ENCODE measurements at regions of chr3 and their contacts with region 1.

Region 1: GRCh38 chr3:99808151-99808794 is 9.4 kb upstream of the CMSS1 start:
- DNase-seq: peak; percentile 24 to 60 (median 45)
- H3K4me3 ChIP-seq: no peak overlapping the region
- H3K4me3 Mint-ChIP-seq: no peak overlapping the region
- H3K27ac ChIP-seq: no peak overlapping the region
- H3K27ac Mint-ChIP-seq: no peak overlapping the region
- H3K4me1 ChIP-seq: no peaks in the 10 kb centered on the region
- H3K4me1 Mint-ChIP-seq: peaks cover 1% of the 10 kb centered on the region
- H3K27me3 ChIP-seq: no peaks in the 10 kb centered on the region
- H3K27me3 Mint-ChIP-seq: peaks cover 0 to 3% (median 1%) of the 10 kb centered on the region in 3 donors
- CTCF ChIP-seq: peak; percentile 83

Region 2: DNA sequence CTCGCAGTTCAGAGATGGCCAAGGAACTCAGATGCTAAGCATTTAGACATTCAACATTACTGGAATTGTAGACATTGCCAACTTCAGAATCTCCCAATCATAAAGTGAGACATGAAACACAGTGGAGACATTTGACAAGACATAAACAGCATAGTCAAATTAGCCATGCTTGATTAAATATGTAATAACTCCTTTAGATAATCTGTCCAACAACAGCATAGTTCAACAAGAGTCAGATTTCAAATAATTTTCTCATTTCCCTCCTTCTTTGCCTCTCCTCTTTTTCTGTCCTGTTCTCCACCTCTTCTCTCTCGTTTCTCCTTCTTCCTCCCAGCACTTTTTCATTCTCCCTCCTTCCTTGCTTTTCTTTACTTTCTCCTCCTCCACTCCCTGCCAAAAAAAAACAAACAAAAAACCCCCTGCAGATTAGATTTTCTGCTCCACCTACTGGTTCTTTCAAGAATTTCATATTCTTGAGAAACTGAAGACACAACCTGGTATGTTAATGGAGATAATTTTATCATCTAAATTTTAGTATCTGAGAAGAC is 1235.0 kb before region 1 on chr3:
- intact Hi-C with region 1: loop called in 1 of 2 experiments (anchors 5 kb)
- DNase-seq: no peak
- H3K4me3 ChIP-seq: no peak overlapping the region
- H3K4me3 Mint-ChIP-seq: no peak overlapping the region
- H3K27ac ChIP-seq: no peak overlapping the region
- H3K27ac Mint-ChIP-seq: peak overlapping the region in 2 of 7 donors; percentile 34 to 50
- H3K4me1 ChIP-seq: peaks cover 0 to 1% of the 10 kb centered on the region in 2 donors
- H3K4me1 Mint-ChIP-seq: peaks cover 9% of the 10 kb centered on the region
- H3K27me3 ChIP-seq: no peaks in the 10 kb centered on the region
- H3K27me3 Mint-ChIP-seq: peaks cover 0 to 7% (median 0%) of the 10 kb centered on the region in 3 donors
- CTCF ChIP-seq: peak; percentile 74

Region 3: GRCh38 chr3:99974962-99975361 is 166.7 kb after region 1 on chr3:
- intact Hi-C with region 1: no loop called
- DNase-seq: no peak
- H3K4me3 ChIP-seq: no peak overlapping the region
- H3K4me3 Mint-ChIP-seq: no peak overlapping the region
- H3K27ac ChIP-seq: no peak overlapping the region
- H3K27ac Mint-ChIP-seq: no peak overlapping the region
- H3K4me1 ChIP-seq: no peaks in the 10 kb centered on the region
- H3K4me1 Mint-ChIP-seq: peaks cover 1% of the 10 kb centered on the region
- H3K27me3 ChIP-seq: no peaks in the 10 kb centered on the region
- H3K27me3 Mint-ChIP-seq: peaks cover 0 to 1% (median 1%) of the 10 kb centered on the region in 3 donors
- CTCF ChIP-seq: no peak

Region 4: GRCh38 chr3:100103558-100104441 is 295.5 kb after region 1 on chr3:
- intact Hi-C with region 1: no loop called
- DNase-seq: no peak
- H3K4me3 ChIP-seq: no peak overlapping the region
- H3K4me3 Mint-ChIP-seq: no peak overlapping the region
- H3K27ac ChIP-seq: no peak overlapping the region
- H3K27ac Mint-ChIP-seq: no peak overlapping the region
- H3K4me1 ChIP-seq: no peaks in the 10 kb centered on the region
- H3K4me1 Mint-ChIP-seq: peaks cover 13% of the 10 kb centered on the region
- H3K27me3 ChIP-seq: no peaks in the 10 kb centered on the region
- H3K27me3 Mint-ChIP-seq: peaks cover 0 to 2% (median 0%) of the 10 kb centered on the region in 3 donors
- CTCF ChIP-seq: no peak

Region 5: GRCh38 chr3:100746092-100746491 is 937.8 kb after region 1 on chr3:
- intact Hi-C with region 1: no loop called
- DNase-seq: no peak
- H3K4me3 ChIP-seq: no peak overlapping the region
- H3K4me3 Mint-ChIP-seq: no peak overlapping the region
- H3K27ac ChIP-seq: no peak overlapping the region
- H3K27ac Mint-ChIP-seq: peak overlapping the region in 1 of 7 donors; percentile 50
- H3K4me1 ChIP-seq: no peaks in the 10 kb centered on the region
- H3K4me1 Mint-ChIP-seq: no peaks in the 10 kb centered on the region
- H3K27me3 ChIP-seq: no peaks in the 10 kb centered on the region
- H3K27me3 Mint-ChIP-seq: no peaks in the 10 kb centered on the region
- CTCF ChIP-seq: no peak

Measured in CD14-positive monocyte (primary cell).